ENCODE measurements at regions of chr7 and their contacts with region 1.

Region 1: DNA sequence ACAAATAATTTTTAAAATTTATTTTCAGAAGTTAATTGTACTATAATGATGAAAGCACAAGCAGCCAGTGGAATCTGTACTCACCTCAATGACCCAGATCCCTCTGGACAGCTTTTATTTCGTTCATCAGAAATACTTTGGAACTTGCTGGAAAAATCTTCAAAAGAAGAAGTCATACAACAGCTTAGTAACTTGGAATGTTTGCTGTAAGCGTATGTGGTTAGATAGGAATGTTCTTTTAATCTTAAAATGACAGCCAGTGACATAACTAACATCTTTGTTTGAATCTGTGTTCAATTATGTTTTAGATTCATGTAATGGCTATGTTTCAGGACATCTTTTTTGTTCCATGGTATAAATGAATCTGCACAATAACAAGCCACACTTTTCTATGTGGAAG is 26.8 kb downstream of the CFAP69 start:
- DNase-seq: peak; percentile 59
- ATAC-seq: no peak
- H3K4me3 ChIP-seq: no peak overlapping the region
- H3K27ac ChIP-seq: peak overlapping the region; percentile 39
- H3K4me1 ChIP-seq: peaks cover 73% of the 10 kb centered on the region
- H3K27me3 ChIP-seq: no peaks in the 10 kb centered on the region
- CTCF ChIP-seq: no peak
- EP300 ChIP-seq: no peak
- POLR2A ChIP-seq: no peak
- RAD21 ChIP-seq: no peak

Region 2: GRCh38 chr7:90236721-90237289 is 34.9 kb before region 1 on chr7:
- CTCF ChIA-PET with region 1: no interaction called
- POLR2A ChIA-PET with region 1: no interaction called
- in situ Hi-C with region 1: no loop called
- intact Hi-C with region 1: loop called (anchors 5 kb)
- DNase-seq: no peak
- ATAC-seq: no peak
- H3K4me3 ChIP-seq: no peak overlapping the region
- H3K27ac ChIP-seq: no peak overlapping the region
- H3K4me1 ChIP-seq: no peaks in the 10 kb centered on the region
- H3K27me3 ChIP-seq: no peaks in the 10 kb centered on the region
- CTCF ChIP-seq: no peak
- EP300 ChIP-seq: no peak
- POLR2A ChIP-seq: no peak
- RAD21 ChIP-seq: no peak

Region 3: DNA sequence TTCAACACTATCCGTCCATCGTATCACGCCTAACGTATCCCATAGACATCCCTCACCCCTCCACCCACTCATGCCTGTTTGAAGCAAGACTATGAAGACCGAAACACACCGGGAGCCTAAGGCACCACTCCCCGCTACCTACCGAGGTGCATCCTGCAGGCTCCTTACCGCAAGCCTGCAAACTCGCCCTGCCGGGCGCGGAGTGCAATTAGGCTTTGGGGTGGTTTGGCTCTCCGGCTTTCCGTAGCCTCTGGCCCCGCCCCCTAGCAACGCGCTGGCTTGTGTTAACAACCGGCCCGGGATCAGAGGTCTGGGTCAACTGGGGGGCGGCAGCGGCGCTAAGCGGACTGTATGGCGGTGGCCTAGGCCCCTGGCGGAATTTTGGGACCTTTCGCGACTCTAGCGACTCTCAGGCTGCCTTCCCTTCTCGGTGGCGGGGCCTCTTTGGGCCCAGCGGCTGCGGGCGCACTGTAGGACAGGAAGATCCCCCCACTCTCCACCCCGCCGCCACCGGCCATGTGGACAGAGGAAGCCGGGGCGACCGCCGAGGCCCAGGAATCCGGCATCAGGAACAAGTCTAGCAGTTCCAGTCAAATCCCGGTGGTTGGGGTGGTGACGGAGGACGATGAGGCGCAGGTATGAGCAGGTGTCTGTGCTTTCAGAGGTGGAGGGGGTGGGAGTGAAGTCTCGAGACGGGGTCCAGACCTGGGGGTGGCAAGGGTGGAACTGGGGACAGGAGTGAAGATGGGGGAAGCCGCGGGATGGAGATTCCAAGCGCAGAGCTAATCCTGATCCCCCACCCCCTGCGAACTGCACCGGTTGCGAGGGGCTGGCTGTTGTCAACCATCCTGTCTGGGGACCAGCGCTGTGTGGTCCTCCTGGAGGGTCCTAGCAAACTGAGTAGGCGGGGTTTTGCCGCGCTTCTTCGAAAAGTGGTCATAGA is 26.6 kb before region 1 on chr7 and contains the start of gene CFAP69:
- CTCF ChIA-PET with region 1: no interaction called
- POLR2A ChIA-PET with region 1: no interaction called
- in situ Hi-C with region 1: no loop called
- intact Hi-C with region 1: loop called (anchors 2 kb)
- DNase-seq: peak; percentile 78
- ATAC-seq: peak; percentile 90
- H3K4me3 ChIP-seq: peak within 1 kb of the TSS; percentile 61 to 91 (median 76)
- H3K27ac ChIP-seq: peak within 1 kb of the TSS; percentile 51
- H3K4me1 ChIP-seq: peaks cover 29% of the 10 kb centered on the region
- H3K27me3 ChIP-seq: no peaks in the 10 kb centered on the region
- CTCF ChIP-seq: peak; percentile 53; the same call in 1 of the 2 replicates
- EP300 ChIP-seq: peak; percentile 20 to 38; a peak in 2 of 4 replicates
- POLR2A ChIP-seq: peak; percentile 33 to 82; a peak in 2 of 4 replicates
- RAD21 ChIP-seq: peak; percentile 39; the same call in 1 of the 2 replicates
- total RNA-seq, gene CFAP69: 2.7 and 4.0 TPM in 2 replicates

Measured in HepG2 (cell line).